Transverse colon (tissue), 4 donors: ENCODE measurements at regions of chr18 and their contacts with region 1.

Region 1: DNA sequence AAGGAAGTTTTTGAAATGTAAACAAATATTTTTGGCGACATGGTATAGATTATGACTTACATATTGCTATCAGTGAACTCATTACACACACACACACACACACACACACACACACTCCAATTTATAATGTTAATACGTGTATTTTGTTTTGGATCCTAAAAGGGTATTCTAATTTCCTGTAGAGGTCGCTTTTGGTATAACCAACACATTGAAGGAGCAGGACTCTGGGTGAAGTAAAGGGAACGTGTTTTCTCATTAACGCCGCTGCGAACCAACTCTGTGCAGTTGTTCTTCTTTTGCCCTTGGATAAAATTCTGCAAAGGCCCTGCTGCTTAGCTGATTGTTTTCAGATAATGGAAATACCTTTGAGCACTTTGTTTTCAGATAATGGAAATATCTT is 190.4 kb downstream of the PMAIP1 start:
- DNase-seq: no peak
- H3K4me3 ChIP-seq: no peak overlapping the region
- H3K27ac ChIP-seq: no peak overlapping the region
- H3K4me1 ChIP-seq: no peaks in the 10 kb centered on the region
- H3K27me3 ChIP-seq: no peaks in the 10 kb centered on the region
- CTCF ChIP-seq: no peak
- EP300 ChIP-seq: no peak
- POLR2A ChIP-seq: no peak

Region 2: DNA sequence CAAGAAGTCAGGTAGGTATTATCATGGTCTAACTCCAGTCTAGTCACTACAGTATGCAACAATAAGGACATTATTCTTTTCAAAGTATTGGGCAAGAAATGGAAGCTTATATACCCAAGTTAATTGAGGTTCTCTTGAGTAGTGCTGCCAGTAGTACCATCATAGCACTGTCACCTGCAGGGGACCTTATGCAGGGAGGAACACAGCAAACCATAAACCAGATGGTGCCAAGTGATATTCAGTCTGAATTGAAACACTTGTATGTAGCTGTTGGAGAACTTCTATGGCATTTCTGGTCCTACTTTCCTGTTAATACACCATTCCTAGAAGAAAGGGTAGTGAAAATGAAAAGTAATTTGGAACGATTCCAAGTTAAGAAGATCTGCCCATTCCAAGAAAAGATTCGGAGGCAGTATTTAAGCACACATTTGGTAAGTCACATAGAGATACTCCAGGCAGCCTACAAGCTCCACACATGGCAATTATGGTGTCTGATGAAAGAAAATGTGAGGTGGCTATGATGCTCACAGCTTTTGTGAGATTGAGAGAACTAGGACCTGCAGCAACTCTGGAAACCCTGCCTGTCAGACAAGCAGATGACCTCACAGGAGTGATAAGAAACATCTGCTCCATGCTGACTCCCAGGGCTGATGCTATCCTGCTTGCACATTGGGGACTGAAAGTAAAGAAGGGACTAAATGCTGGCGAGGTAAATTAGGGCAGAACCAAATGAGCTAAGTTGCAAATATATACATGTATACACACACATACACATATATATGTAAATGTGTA is 107.7 kb after region 1 on chr18:
- in situ Hi-C with region 1: loop called in 1 of 4 experiments (anchors 25 kb)
- intact Hi-C with region 1: no loop called
- DNase-seq: no peak
- H3K4me3 ChIP-seq: no peak overlapping the region
- H3K27ac ChIP-seq: no peak overlapping the region
- H3K4me1 ChIP-seq: no peaks in the 10 kb centered on the region
- H3K27me3 ChIP-seq: no peaks in the 10 kb centered on the region
- CTCF ChIP-seq: no peak
- EP300 ChIP-seq: no peak
- POLR2A ChIP-seq: no peak

Region 3: DNA sequence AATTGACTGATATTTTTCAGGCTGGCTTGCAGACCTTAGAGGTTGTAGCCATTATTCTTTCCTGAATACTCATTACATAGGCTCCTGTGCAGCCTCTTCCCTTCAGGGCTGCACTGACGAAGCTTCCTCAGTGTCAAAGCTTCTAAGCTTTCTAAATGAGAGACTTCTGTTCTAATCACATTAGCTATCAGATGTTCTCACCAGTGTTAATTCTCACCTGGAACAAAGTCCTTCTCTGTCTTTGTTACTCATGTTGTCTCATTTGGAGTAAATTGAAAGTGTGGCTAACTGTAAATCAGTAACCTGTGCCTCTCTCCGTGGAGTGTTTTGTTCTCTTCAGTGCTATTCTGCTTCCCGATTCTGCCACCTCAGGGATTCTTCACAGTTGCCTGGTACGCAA is 205.5 kb after region 1 on chr18:
- in situ Hi-C with region 1: no loop called
- intact Hi-C with region 1: no loop called
- DNase-seq: no peak
- H3K4me3 ChIP-seq: no peak overlapping the region
- H3K27ac ChIP-seq: peak overlapping the region in 1 of 4 donors; percentile 45
- H3K4me1 ChIP-seq: no peaks in the 10 kb centered on the region
- H3K27me3 ChIP-seq: no peaks in the 10 kb centered on the region
- CTCF ChIP-seq: no peak
- EP300 ChIP-seq: no peak
- POLR2A ChIP-seq: no peak

Region 4: DNA sequence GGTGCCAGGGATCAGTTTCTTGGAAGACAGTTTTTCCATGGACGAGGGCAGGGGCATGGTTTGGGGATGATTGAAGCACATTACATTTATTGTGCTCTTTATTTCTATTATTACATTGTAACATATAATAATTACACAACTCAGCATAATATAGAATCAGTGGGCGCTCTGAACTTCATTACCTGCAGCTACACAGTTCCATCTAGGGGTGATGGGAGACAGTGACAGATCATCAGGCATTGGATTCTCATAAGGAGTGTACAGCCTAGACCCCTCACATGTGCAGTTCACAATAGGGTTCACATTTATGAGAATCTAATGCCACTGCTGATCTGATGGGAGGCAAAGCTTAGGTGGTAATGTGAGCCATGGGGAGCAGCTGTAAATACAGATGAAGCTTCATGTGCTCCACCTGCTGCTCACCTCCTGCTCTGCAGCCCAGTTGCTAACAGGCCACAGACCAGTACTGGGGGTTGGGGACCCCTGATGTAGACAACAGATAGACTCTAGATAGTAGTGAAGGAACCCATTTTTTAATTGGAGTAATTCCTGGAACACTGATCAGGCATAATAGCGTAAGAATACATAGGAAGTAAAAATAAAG is 323.9 kb after region 1 on chr18:
- in situ Hi-C with region 1: loop called in 1 of 4 experiments (anchors 25 kb)
- intact Hi-C with region 1: no loop called
- DNase-seq: peak; percentile 14
- H3K4me3 ChIP-seq: no peak overlapping the region
- H3K27ac ChIP-seq: no peak overlapping the region
- H3K4me1 ChIP-seq: no peaks in the 10 kb centered on the region
- H3K27me3 ChIP-seq: no peaks in the 10 kb centered on the region
- CTCF ChIP-seq: peak in 4 of 5 experiments; percentile 17 to 30 (median 19)
- EP300 ChIP-seq: no peak
- POLR2A ChIP-seq: no peak